ENCODE measurements at regions of chr2 and their contacts with region 1.

Region 1: DNA sequence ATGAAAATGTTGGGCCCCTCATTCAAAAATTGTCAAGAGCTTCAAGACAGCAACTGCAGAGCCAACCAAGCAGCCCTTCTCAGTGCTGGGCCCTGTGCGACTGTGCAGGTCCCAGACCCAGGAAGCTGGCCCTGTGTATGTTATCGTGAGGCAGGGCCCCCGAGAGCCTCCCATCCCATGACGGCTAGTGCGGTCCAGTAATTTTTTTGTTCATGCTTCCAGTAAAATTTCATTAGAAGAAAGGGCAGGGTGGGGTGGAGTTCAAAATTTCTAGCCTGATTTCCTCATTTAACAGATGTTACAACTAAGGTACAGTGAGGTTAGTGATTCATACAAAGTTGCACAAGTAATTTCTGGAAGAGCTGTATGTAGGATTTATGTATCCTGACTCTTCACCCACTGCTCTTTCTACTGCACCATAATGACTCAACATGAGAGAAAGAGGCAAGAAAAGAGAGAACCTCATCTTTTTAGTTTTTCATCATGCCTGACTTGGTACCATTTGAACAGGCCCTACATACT is 105.5 kb downstream of the ZEB2 start:
- DNase-seq: peak; percentile 42
- ATAC-seq: peak; percentile 95
- H3K4me3 Mint-ChIP-seq: no peak overlapping the region
- H3K27ac Mint-ChIP-seq: no peak overlapping the region
- H3K4me1 Mint-ChIP-seq: peaks cover 20% of the 10 kb centered on the region
- H3K27me3 Mint-ChIP-seq: peaks cover 2% of the 10 kb centered on the region

Region 2: DNA sequence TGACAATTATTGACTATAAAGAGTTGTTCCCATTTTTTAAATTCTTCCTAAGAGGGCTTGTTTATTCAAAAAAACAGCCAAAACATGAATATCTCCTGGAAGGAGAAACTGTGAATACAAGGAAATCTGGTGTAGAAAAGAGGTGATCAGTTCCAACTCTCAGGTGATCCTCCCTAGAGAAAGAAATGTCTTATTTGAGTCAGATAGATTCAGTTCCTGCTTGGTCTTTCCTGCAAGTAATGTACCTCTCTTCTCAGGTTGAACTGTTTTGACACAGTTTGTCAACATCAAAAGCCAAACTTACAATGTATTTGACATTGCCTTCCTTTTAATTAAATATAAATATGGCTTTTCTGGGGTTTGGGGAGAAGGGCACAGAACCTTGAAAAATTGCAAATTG is 717.7 kb before region 1 on chr2:
- CTCF ChIA-PET with region 1: no interaction called
- POLR2A ChIA-PET with region 1: no interaction called
- intact Hi-C with region 1: loop called in 1 of 2 experiments (anchors 1 kb)
- DNase-seq: no peak
- ATAC-seq: no peak
- H3K4me3 Mint-ChIP-seq: no peak overlapping the region
- H3K27ac Mint-ChIP-seq: no peak overlapping the region
- H3K4me1 Mint-ChIP-seq: peaks cover 56% of the 10 kb centered on the region
- H3K27me3 Mint-ChIP-seq: no peaks in the 10 kb centered on the region

Region 3: DNA sequence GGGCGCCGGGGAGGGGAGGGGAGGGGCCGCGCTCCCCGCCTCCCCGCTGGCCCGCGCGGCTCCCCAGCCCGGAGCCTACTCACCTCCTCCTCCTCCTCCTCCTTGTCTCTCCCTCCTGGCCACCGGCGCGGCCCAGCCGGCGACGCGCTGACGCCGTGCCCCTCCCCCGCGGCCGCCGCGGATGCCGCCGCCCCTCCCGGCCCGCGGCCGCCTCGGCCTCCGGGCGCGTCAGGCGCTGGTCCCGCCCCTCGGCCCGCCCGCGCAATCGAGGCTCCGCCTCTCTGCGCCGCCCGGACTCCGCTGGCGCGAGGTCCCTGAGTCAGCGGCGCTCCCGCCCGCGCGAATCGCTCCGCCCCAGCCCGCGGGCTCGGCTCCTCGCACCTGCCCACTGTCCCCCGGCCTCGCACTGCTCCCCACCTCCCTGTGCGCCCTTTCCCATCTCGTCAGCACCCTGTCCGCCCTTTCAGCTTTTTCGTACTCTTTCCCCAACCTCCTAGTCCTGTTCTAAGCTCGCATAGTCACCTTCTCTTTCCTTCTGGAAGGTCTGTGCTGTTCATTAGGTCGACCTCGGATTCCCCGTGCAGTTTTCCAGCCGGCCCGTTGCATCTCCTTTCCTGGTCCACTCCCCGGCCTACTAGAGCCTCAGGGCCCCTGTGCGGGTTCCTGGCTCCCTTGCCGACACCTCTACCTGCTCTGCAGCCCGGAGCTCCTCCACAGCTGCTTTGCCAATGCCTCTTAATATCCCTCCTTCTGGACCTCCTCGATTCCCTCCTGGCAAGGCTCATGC is 81.8 kb before region 1 on chr2:
- CTCF ChIA-PET with region 1: no interaction called
- POLR2A ChIA-PET with region 1: no interaction called
- intact Hi-C with region 1: loop called in 1 of 2 experiments (anchors 5 kb)
- DNase-seq: peak; percentile 94
- ATAC-seq: peak; percentile 88
- H3K4me3 Mint-ChIP-seq: peak overlapping the region; percentile 93
- H3K27ac Mint-ChIP-seq: peak overlapping the region; percentile 88
- H3K4me1 Mint-ChIP-seq: peaks cover 32% of the 10 kb centered on the region
- H3K27me3 Mint-ChIP-seq: peaks cover 2% of the 10 kb centered on the region

Region 4: GRCh38 chr2:144382849-144383248 is 31.5 kb before region 1 on chr2:
- CTCF ChIA-PET with region 1: no interaction called
- POLR2A ChIA-PET with region 1: no interaction called
- intact Hi-C with region 1: loop called in 1 of 2 experiments (anchors 1 kb)
- DNase-seq: no peak
- ATAC-seq: peak; percentile 93
- H3K4me3 Mint-ChIP-seq: no peak overlapping the region
- H3K27ac Mint-ChIP-seq: no peak overlapping the region
- H3K4me1 Mint-ChIP-seq: peaks cover 34% of the 10 kb centered on the region
- H3K27me3 Mint-ChIP-seq: peaks cover 7% of the 10 kb centered on the region

Region 5: GRCh38 chr2:144449028-144449406 is 34.6 kb after region 1 on chr2:
- CTCF ChIA-PET with region 1: no interaction called
- POLR2A ChIA-PET with region 1: no interaction called
- intact Hi-C with region 1: loop called (anchors 1 to 2 kb)
- DNase-seq: no peak
- ATAC-seq: no peak
- H3K4me3 Mint-ChIP-seq: no peak overlapping the region
- H3K27ac Mint-ChIP-seq: no peak overlapping the region
- H3K4me1 Mint-ChIP-seq: peaks cover 24% of the 10 kb centered on the region
- H3K27me3 Mint-ChIP-seq: peaks cover 18% of the 10 kb centered on the region

Region 6: GRCh38 chr2:144454466-144455287 is 40.3 kb after region 1 on chr2:
- CTCF ChIA-PET with region 1: no interaction called
- POLR2A ChIA-PET with region 1: no interaction called
- intact Hi-C with region 1: loop called (anchors 1 to 2 kb)
- DNase-seq: peak; percentile 36
- ATAC-seq: peak; percentile 82
- H3K4me3 Mint-ChIP-seq: no peak overlapping the region
- H3K27ac Mint-ChIP-seq: peak overlapping the region; percentile 16
- H3K4me1 Mint-ChIP-seq: peaks cover 48% of the 10 kb centered on the region
- H3K27me3 Mint-ChIP-seq: peaks cover 21% of the 10 kb centered on the region

Region 7: GRCh38 chr2:144524118-144524957 is 110.0 kb after region 1 on chr2:
- CTCF ChIA-PET with region 1: no interaction called
- POLR2A ChIA-PET with region 1: no interaction called
- intact Hi-C with region 1: no loop called
- DNase-seq: peak; percentile 40
- ATAC-seq: peak; percentile 42
- H3K4me3 Mint-ChIP-seq: peak overlapping the region; percentile 71
- H3K27ac Mint-ChIP-seq: no peak overlapping the region
- H3K4me1 Mint-ChIP-seq: peaks cover 23% of the 10 kb centered on the region
- H3K27me3 Mint-ChIP-seq: peaks cover 40% of the 10 kb centered on the region

Region 8: GRCh38 chr2:144572977-144573376 is 158.6 kb after region 1 on chr2:
- CTCF ChIA-PET with region 1: no interaction called
- POLR2A ChIA-PET with region 1: no interaction called
- intact Hi-C with region 1: loop called in 1 of 2 experiments (anchors 5 kb)
- DNase-seq: no peak
- ATAC-seq: peak; percentile 75
- H3K4me3 Mint-ChIP-seq: no peak overlapping the region
- H3K27ac Mint-ChIP-seq: no peak overlapping the region
- H3K4me1 Mint-ChIP-seq: peaks cover 25% of the 10 kb centered on the region
- H3K27me3 Mint-ChIP-seq: peaks cover 11% of the 10 kb centered on the region

Measured in activated CD4-positive, alpha-beta T cell treated with anti-CD3 and anti-CD28 coated beads for 36 hours (primary cell).